Left cardiac atrium (tissue), 4 donors: ENCODE measurements at regions of chr12 and their contacts with region 1.

Region 1: DNA sequence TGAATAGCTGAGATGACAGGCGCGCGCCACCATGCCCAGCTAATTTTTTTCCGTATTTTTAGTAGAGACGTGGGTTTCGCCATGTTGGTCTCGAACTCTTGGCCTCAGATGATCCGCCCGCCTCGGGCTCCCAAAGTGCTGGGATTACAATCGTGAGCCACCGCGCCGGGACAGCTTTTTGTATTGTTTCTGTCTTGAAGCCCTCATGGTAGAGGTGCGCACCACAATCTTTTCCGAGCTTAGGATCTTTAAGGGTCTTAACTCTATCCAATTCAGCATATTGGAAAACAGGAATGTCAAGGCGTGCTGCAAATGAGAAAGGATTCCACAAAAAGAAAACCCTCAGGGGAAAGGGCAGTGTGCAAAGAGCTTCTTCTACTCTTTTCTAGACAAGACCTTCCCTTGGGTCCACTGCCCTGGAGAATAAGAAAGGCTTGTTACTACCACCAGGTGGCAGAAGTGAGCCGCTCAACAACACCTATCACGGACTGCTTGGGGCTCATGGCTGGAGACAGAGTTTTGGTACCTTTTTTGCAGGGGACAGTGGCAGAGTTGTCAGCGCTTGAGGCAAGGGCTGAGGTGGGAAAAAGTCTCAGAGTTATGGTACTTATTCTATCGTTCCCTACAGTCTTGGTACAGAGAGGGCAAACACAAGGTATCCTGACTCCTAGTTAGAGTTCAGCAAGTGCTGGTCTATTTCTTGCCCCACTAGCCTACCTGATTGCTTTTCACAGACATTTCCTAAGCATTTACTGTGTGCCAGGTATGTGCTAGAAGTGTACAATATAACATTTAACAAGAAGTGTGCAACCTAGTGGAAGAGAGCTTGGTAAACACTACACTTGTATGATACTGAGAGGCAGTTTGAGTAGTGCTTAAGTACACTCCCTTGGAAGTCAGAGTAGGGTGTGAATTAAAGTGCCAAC is 16.4 kb upstream of the SP7 start:
- DNase-seq: peak; percentile 79
- ATAC-seq: peak; percentile 97 to 98

Region 2: DNA sequence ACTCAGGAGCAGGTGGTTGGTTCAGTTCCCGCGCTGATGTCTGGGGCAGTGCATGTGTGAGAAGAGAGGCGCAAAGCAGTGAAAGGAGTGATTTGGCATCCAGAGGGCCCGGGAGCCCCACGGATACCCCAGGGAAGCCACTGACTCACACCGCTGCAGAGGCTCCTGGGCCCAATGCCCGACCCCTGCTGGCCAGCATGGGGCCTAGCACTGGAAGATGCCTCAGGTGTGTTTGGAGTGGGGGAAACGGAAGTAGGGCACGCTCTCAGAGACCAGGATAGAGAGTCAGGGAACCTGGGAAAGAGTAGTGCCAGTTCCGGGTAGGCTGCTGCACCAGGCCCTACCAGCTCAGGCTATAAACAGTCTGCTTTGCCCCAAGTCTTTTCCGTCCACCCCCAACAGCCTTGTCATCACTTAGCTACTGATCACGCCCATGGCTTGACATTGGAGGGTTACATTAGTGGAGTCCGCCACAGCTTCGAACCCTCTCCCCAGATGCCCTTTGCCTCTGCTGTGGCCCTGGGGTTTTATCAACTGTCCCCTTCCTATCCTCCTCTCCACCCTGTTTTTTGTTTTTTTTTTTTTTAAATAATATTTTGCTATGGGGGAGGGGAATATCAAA is 162.4 kb before region 1 on chr12:
- intact Hi-C with region 1: no loop called
- DNase-seq: peak; percentile 73
- ATAC-seq: peak; percentile 79 to 84

Region 3: DNA sequence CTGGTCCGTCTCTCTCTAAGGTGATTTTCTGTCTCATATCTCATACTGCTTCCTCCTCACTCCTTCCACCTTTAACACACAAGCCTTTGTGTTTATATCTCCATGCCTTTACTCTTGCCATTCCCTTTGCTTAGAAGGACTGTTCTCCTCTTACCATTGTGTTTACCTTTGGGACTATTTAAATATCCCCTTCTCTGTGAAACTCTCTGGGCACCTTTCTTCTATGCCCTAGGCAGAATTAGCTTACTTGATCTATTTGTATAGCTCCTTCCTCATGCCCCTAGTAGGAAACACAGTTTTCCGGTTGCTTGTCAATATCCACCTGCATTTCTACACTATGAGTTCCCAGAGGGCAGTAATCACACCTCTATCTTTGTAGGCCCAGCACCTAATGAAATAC is 67.2 kb after region 1 on chr12:
- intact Hi-C with region 1: loop called (anchors 2 to 5 kb)
- DNase-seq: no peak
- ATAC-seq: no peak

Region 4: GRCh38 chr12:53424626-53425514 is 72.3 kb after region 1 on chr12:
- intact Hi-C with region 1: loop called (anchors 2 to 5 kb)
- DNase-seq: no peak
- ATAC-seq: peak in 1 of 2 donors; percentile 7

Region 5: GRCh38 chr12:53508534-53509199 is 156.1 kb after region 1 on chr12:
- intact Hi-C with region 1: loop called (anchors 5 kb)
- DNase-seq: peak; percentile 84
- ATAC-seq: peak; percentile 82 to 84